Activated B cell treated with CpG ODN at 0.5 μM for 24 hours (primary cell): ENCODE measurements at regions of chr19 and their contacts with region 1.

Region 1: DNA sequence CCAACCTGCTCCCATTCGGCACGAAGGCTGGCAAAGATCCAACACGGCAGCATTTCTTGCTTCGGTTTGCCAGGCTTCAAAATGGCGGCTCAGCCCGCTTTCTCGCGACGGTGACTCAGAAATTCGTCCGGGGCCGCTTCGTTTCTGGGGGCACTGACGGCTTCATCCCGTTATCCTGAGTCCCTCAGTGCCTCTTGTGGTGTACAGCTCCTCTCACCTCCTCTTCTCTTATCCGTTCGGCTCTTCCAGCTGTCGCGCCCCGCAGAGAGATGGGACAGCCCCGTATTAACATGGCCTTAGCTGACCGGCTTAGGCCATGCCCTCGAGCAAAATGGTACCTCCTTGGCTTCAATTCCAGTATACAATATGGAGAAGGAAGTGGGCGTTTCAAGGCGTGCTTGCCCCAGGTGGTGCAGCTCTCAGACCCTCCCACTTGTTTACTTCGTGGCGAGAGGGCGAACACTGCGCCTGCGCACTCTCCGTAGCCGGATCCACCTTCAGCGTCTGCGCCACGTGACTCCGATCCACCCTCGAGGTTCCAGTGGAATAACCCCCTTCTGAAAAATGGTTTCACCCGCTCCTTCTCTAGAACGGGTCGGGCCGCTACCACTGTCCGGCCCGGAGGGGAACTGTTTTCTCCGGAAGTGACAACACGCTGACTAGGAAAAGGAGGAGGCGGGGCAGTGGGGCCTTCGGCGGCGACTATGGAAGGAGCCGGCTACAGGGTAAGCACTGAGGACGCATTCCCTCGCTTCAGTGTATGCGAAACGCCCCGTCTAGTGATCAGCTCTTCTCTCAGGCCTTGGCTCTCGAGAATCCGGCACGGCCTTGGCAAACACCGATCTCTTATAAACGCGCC is at the starts of genes AKT1S1 and TBC1D17:
- DNase-seq: peak; percentile 94
- ATAC-seq: peak; percentile 68
- H3K4me3 Mint-ChIP-seq: no peak within 1 kb of the TSS
- H3K27ac Mint-ChIP-seq: no peak within 1 kb of the TSS
- H3K4me1 Mint-ChIP-seq: peaks cover 25% of the 10 kb centered on the region
- H3K27me3 Mint-ChIP-seq: no peaks in the 10 kb centered on the region
- CTCF ChIP-seq: no peak
- total RNA-seq, gene AKT1S1: 21.3 and 28.7 TPM in 2 replicates
- total RNA-seq, gene TBC1D17: 51.1 and 57.0 TPM in 2 replicates

Region 2: GRCh38 chr19:48637170-48637947 is 1239.9 kb before region 1 on chr19 and contains the start of gene DBP:
- CTCF ChIA-PET with region 1: no interaction called
- POLR2A ChIA-PET with region 1: no interaction called
- intact Hi-C with region 1: loop called (anchors 2 kb)
- DNase-seq: peak; percentile 97
- ATAC-seq: peak; percentile 72
- H3K4me3 Mint-ChIP-seq: peak within 1 kb of the TSS; percentile 93
- H3K27ac Mint-ChIP-seq: peak within 1 kb of the TSS; percentile 99
- H3K4me1 Mint-ChIP-seq: peaks cover 68% of the 10 kb centered on the region
- H3K27me3 Mint-ChIP-seq: no peaks in the 10 kb centered on the region
- CTCF ChIP-seq: no peak
- total RNA-seq, gene DBP: 8.7 and 9.2 TPM in 2 replicates

Region 3: DNA sequence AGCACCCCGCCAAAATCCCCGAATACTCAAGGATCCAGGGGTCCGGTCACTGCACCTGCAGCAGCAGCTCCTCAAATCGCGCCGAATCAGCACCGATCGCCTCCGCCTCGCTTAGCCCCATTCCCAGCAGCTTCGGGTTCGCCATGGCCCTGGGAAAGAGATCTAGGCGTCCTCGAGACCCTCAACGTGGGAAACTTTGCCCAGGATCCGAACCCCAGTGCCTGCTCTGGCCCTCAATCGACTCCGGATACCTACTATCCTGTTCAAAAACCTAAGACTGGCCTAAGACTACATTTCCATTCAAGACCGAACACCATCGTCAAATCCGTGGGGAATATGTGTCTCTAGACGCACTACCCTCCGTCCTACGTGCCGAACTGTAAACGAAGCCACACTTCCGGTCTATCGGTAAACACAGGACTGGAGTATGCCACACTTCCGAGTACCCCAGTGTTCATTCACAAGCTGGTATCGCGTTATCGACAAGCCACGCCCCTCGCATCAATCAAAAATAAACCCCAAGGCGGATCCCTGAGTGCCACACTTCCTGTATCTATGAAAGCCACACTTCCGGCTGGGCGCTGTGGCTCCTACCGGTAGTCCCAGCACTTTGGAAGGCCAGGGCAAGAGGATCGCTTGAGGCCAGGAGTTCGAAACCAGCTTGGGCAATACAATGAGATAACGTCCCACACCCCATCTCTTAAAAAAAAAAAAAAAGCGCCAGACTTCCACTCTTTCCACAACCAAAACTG is 425.6 kb before region 1 on chr19 and contains the start of gene PIH1D1:
- CTCF ChIA-PET with region 1: no interaction called
- POLR2A ChIA-PET with region 1: no interaction called
- intact Hi-C with region 1: loop called (anchors 5 kb)
- DNase-seq: peak; percentile 79
- ATAC-seq: peak; percentile 60
- H3K4me3 Mint-ChIP-seq: peak within 1 kb of the TSS; percentile 99
- H3K27ac Mint-ChIP-seq: peak within 1 kb of the TSS; percentile 100
- H3K4me1 Mint-ChIP-seq: peaks cover 55% of the 10 kb centered on the region
- H3K27me3 Mint-ChIP-seq: no peaks in the 10 kb centered on the region
- CTCF ChIP-seq: no peak
- total RNA-seq, gene PIH1D1: 110 and 111 TPM in 2 replicates

Region 4: DNA sequence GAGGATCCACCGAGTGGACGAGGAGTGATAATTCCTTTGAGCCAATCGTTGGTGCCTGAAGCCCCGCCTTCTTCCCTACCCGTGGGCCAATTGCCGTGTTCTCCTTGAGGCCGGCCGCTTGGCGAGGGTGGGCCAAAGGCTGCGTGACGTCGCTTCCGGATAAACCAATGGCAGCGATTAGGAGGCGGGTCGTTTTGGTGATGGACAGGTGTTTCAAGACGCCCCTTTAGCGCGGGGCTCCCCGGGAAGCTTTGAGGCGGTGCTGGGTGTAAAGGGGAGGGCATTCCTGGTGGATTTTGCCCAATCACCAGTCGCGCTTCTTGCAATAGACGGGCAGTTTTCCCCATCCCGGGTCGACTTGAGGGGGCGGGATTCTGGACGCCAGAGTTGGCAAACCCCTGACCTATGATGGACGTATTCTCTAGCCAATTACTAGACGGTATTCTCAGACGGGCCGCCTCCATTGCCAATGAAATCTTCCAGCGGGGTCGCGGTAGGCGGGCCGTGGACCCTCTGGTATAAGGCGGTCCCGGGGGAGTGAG is 200.5 kb before region 1 on chr19:
- CTCF ChIA-PET with region 1: no interaction called
- POLR2A ChIA-PET with region 1: interaction called, 9 read pairs
- intact Hi-C with region 1: loop called (anchors 1 kb)
- DNase-seq: peak; percentile 93
- ATAC-seq: peak; percentile 67
- H3K4me3 Mint-ChIP-seq: peak overlapping the region; percentile 99
- H3K27ac Mint-ChIP-seq: peak overlapping the region; percentile 99
- H3K4me1 Mint-ChIP-seq: peaks cover 70% of the 10 kb centered on the region
- H3K27me3 Mint-ChIP-seq: no peaks in the 10 kb centered on the region
- CTCF ChIP-seq: no peak

Region 5: DNA sequence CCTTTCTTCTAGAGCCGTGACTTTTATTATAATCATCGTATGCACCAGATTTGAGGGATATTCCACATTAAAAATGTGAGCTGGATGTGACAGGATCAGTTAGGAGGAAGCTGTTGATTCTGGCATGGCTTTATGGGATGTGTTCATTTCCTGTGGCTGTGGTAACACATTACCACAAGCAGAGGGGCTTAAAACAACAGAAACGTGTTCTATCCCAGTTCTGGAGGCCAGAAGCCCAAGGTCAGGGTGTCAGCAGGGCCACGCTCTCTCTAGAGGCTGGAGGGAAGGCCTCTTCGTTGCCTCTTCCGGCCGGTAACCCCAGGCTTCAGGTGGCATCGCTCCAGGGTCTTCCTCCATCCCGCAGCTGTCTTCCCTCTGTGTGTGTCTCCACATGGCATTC is 44.7 kb before region 1 on chr19:
- CTCF ChIA-PET with region 1: no interaction called
- POLR2A ChIA-PET with region 1: no interaction called
- intact Hi-C with region 1: no loop called
- DNase-seq: no peak
- ATAC-seq: no peak
- H3K4me3 Mint-ChIP-seq: no peak overlapping the region
- H3K27ac Mint-ChIP-seq: no peak overlapping the region
- H3K4me1 Mint-ChIP-seq: peaks cover 2% of the 10 kb centered on the region
- H3K27me3 Mint-ChIP-seq: no peaks in the 10 kb centered on the region
- CTCF ChIP-seq: no peak

Region 6: DNA sequence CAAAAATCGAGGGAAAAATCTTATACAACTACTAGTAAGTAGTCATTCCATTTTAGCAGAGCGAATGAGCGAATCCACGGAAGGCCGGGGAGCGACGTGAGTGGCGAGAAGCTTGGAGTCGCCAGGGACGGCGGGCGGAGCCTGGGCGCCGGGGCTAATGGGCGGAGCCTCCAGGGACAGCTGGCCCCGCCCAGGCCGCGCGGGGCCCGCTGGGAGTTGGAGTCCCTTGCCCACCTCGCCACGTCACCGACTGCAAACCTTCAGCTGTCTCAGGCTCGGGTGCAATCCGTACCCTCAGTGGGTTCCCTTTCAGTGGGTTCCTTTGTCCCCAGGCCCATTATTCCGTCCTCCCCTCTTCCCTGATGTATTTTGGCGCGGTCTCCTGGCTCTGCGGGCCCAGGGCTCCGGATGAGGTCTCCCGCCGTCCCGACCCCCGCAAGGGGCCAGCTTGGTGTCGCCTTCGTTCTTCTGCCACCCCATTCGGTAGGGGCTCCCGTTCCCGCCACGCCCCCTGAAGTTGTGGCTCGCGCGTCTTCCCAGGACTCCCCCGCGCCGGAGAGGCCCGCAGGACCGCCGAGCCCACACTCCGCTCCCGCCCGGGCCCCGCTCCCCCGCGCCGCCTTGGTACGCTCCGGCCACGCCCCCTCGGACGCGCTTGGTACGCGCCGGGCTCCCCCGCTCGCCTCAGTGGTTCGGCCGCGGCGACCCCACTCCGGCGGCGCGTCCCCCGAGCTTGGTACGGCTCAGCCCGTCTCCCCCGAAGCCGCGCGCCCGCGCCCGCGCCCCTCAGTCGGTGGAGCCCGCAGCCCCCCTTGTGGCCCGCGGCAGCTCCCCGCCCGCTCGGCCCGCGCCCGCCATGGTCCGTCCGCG is 26.5 kb before region 1 on chr19 and contains the start of gene PTOV1:
- CTCF ChIA-PET with region 1: no interaction called
- POLR2A ChIA-PET with region 1: interaction called, 26 read pairs
- intact Hi-C with region 1: loop called (anchors 1 kb)
- DNase-seq: peak; percentile 96
- ATAC-seq: peak; percentile 84
- H3K4me3 Mint-ChIP-seq: peak within 1 kb of the TSS; percentile 92
- H3K27ac Mint-ChIP-seq: peak within 1 kb of the TSS; percentile 95
- H3K4me1 Mint-ChIP-seq: peaks cover 56% of the 10 kb centered on the region
- H3K27me3 Mint-ChIP-seq: no peaks in the 10 kb centered on the region
- CTCF ChIP-seq: no peak
- total RNA-seq, gene PTOV1: 103 and 107 TPM in 2 replicates

Region 7: DNA sequence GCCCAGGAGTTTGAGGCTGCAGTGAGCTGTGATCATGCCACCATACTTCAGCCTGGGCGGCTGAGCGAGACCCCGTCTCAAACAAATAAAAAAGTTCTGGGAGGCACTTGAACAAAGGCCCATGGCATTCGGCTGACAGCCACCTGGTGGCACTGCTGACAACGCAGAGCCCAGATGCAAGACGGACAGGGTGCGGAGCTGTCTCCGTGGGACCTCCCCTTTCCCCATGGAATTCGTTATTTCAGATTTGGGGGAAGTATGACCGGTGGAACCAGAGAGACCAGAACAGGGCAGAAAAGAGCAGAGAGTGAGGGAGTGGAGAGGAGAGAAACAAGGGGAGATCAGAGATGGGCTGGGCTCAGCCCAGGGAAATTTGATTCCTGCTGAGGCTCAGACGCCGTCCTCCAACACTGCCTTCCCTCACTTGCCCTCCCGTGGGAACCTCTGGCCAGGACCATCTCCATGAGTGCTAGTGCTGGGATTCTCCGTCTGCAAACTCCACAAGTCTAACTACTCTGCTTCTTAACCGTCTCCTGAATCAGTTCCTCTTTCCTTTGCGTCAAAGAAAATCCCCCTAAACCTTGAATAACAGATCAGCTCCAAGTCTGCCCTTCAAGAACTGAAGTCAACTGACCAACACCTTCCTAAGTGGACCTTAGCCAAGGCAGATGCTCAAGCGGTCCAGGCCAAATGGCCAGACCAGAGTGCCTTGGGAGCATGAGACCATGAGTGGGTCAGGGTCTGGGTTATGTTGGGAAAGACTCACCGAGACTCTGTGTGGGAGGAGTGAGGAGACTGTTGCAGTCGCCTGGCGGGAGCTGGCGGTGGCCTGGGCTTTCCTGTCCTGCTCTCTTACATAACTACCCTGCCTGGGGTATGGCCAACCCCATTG is 39.8 kb after region 1 on chr19:
- CTCF ChIA-PET with region 1: no interaction called
- POLR2A ChIA-PET with region 1: interaction called, 16 read pairs
- intact Hi-C with region 1: no loop called
- DNase-seq: peak; percentile 41
- ATAC-seq: peak; percentile 74
- H3K4me3 Mint-ChIP-seq: peak overlapping the region; percentile 77
- H3K27ac Mint-ChIP-seq: peak overlapping the region; percentile 94
- H3K4me1 Mint-ChIP-seq: peaks cover 77% of the 10 kb centered on the region
- H3K27me3 Mint-ChIP-seq: no peaks in the 10 kb centered on the region
- CTCF ChIP-seq: no peak

Region 8: DNA sequence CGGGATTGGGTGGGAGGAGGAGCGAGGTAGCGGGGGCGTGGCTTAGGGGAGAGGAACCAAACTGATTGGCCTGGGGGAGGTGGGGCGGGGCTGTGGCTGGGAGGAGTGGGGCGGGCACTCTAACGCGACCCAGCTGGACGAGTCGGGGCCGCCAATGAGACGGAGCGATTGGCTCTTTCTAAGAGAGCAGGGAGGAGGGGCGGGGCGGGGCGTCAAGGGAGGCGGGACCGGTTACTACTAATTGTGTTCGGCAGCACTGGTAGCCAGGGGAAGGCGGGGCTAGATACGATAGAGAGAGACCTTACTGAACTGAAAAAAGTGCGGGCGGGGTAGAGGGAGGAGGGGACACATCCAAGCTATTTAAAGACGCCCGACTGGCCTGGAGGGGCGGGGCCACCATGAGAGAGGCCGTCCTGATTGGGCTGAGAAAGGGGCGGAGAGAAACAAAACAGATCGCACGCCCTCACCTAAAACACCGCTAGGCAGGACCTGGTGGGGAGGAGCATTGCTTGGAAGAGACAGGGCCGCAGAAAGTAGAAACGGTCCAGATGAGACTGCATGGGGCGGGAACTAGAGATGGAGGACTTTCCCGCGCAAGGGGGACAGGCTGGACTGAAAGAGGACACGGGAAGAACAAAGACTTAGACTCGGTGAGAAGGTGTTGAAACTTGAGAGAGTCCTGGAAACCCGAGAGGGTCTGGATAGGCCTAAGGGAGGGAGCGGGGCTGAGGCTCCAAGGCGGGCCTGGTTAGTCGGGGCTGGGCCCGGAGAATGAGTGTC is 452.1 kb after region 1 on chr19 and contains the start of gene KCNC3:
- CTCF ChIA-PET with region 1: no interaction called
- POLR2A ChIA-PET with region 1: interaction called, 5 read pairs
- intact Hi-C with region 1: loop called (anchors 1 kb)
- DNase-seq: peak; percentile 91
- ATAC-seq: peak; percentile 64
- H3K4me3 Mint-ChIP-seq: peak within 1 kb of the TSS; percentile 93
- H3K27ac Mint-ChIP-seq: peak within 1 kb of the TSS; percentile 98
- H3K4me1 Mint-ChIP-seq: peaks cover 78% of the 10 kb centered on the region
- H3K27me3 Mint-ChIP-seq: peaks cover 5% of the 10 kb centered on the region
- CTCF ChIP-seq: no peak
- total RNA-seq, gene KCNC3: 34.5 and 44.3 TPM in 2 replicates